HepG2 (cell line): ENCODE measurements at regions of chr17 and their contacts with region 1.

Region 1: DNA sequence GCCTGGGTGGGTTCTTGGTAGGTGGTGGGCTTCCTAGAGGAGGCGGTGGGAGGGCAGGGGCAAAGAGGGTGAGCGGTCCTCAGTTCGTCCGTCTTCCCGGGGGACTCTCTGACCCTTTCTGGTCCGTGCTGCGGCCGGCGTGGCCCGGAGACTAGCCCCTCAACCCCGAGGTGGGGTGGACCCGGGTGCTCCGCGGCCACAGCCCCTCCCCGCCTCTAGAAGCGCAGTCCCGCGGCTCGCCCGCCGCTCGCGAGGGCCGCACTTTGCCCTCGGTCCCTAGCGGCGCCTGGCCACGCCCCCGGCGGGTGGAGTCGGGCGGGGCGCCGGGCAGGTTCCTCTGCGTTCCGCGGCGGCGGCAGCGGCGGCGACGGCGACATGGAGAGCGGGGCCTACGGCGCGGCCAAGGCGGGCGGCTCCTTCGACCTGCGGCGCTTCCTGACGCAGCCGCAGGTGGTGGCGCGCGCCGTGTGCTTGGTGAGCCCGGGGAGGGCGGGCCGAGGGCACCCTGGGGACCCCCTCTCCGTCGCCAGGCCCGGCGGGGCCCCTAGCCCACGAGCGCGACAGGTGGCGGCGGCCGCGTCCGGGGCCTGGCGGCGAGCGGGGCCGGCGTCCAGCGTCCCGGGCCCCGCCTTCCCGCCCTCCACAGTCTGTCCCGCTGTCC is at the start of gene SYNGR2:
- DNase-seq: peak; percentile 74
- ATAC-seq: peak; percentile 69
- H3K4me3 ChIP-seq: peak within 1 kb of the TSS; percentile 73 to 88 (median 84)
- H3K27ac ChIP-seq: peak within 1 kb of the TSS; percentile 51
- H3K4me1 ChIP-seq: peaks cover 62% of the 10 kb centered on the region
- H3K27me3 ChIP-seq: peaks cover 0 to 2% of the 10 kb centered on the region in 2 experiments; a peak in 1 of 5 replicates
- CTCF ChIP-seq: peak; percentile 32; the same call in 1 of the 2 replicates
- EP300 ChIP-seq: peak in 1 of 2 experiments; percentile 41; a peak in 2 of 4 replicates
- POLR2A ChIP-seq: peak; percentile 65 to 92
- RAD21 ChIP-seq: peak; percentile 76
- total RNA-seq, gene SYNGR2: 28.7 and 46.7 TPM in 2 replicates

Region 2: DNA sequence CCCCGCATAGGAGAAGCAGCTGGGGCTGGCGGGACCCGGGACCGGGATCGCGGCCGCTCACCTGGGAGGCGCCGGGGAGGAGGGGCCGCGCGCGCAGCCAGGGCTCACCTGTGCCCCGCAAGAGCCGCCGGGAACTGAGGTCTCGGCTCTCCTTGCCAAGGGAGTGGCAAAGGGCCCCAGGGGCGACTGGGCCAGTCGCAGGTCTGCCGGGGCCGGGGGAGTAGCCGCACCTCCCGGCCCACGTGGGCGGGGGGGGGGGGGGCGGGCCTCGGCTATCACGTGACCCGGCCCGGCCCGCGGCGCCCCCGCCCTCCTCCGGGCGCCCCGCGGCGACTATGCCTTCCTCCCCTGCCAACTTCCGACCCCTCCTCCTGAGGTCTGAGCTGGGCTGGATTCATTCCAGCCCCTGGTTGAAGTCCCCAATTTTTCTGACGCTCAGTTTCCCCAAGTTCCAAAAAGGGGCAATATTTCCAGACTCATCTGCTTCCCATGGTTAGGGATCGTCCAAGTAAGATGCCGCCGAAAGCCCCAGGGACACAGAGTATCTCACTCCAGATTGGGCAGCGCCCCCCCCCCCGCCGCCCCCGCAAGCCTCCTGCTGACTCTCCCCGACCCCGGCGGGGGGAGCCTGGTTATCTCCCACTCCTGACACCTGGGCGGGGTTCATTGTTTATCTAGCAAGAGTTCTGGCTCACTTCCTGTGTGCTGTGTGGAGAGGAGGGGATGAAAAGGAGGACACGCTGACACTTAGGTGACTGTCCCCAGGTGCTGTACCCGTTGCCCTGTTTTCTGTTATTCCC is 39.6 kb before region 1 on chr17 and contains the start of gene TMC6:
- CTCF ChIA-PET with region 1: no interaction called
- POLR2A ChIA-PET with region 1: interaction called, 8 read pairs
- in situ Hi-C with region 1: no loop called
- intact Hi-C with region 1: loop called (anchors 5 kb)
- DNase-seq: peak; percentile 87
- ATAC-seq: peak; percentile 58
- H3K4me3 ChIP-seq: peak within 1 kb of the TSS; percentile 67 to 95 (median 86)
- H3K27ac ChIP-seq: peak within 1 kb of the TSS; percentile 91
- H3K4me1 ChIP-seq: peaks cover 55% of the 10 kb centered on the region
- H3K27me3 ChIP-seq: no peaks in the 10 kb centered on the region
- CTCF ChIP-seq: no peak
- EP300 ChIP-seq: no peak
- POLR2A ChIP-seq: peak; percentile 67 to 77
- RAD21 ChIP-seq: peak; percentile 60
- total RNA-seq, gene TMC6: 20.4 and 48.4 TPM in 2 replicates

Region 3: GRCh38 chr17:78214706-78215061 is 46.3 kb after region 1 on chr17:
- CTCF ChIA-PET with region 1: no interaction called
- POLR2A ChIA-PET with region 1: no interaction called
- in situ Hi-C with region 1: no loop called
- intact Hi-C with region 1: no loop called
- DNase-seq: no peak
- ATAC-seq: no peak
- H3K4me3 ChIP-seq: peak overlapping the region; percentile 82 to 93 (median 91)
- H3K27ac ChIP-seq: peak overlapping the region; percentile 72
- H3K4me1 ChIP-seq: peaks cover 26% of the 10 kb centered on the region
- H3K27me3 ChIP-seq: no peaks in the 10 kb centered on the region; a peak in 1 of 5 replicates
- CTCF ChIP-seq: no peak
- EP300 ChIP-seq: no peak
- POLR2A ChIP-seq: no peak
- RAD21 ChIP-seq: no peak